ENCODE measurements at regions of chr15 and their contacts with region 1.

Region 1: DNA sequence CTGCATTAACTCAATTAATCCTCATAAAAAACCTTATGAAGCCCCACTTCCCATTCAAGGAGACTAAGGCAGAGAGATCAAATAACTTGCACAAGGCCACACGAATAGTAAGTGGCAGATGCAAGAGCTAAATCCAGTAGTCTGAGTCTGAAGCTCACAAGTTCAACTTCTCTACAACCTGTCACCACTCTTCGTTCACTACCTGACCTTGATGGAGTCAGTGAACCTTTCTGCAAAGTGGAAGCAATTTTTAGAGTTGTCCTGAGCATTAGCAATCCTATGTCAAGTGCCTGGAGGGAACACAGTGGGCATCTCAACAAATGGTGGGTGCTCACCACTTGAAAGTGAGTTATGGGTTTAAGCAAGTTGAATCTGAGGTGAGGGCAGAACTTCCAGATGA is 2.1 kb upstream of the SPINT1 start:
- DNase-seq: no peak
- H3K4me3 ChIP-seq: no peak overlapping the region
- H3K27ac ChIP-seq: no peak overlapping the region
- H3K4me1 ChIP-seq: peaks cover 0 to 24% (median 14%) of the 10 kb centered on the region in 4 donors
- H3K27me3 ChIP-seq: peaks cover 0 to 39% of the 10 kb centered on the region in 2 donors
- CTCF ChIP-seq: no peak

Region 2: GRCh38 chr15:40807028-40807887 is 34.5 kb before region 1 on chr15 and contains the starts of genes DNAJC17 and ZFYVE19:
- intact Hi-C with region 1: loop called (anchors 2 kb)
- DNase-seq: peak; percentile 98
- H3K4me3 ChIP-seq: peak within 1 kb of the TSS; percentile 69 to 96
- H3K27ac ChIP-seq: peak within 1 kb of the TSS; percentile 87 to 98
- H3K4me1 ChIP-seq: peaks cover 0 to 29% (median 16%) of the 10 kb centered on the region in 4 donors
- H3K27me3 ChIP-seq: no peaks in the 10 kb centered on the region
- CTCF ChIP-seq: no peak

Measured in tibial artery (tissue), 4 donors.